Left ventricle myocardium superior (tissue), 1 donor: ENCODE measurements at regions of chr1 and their contacts with region 1.

Region 1: GRCh38 chr1:183471743-183472487 is 384 bp upstream of the SMG7 start:
- DNase-seq: peak; percentile 97
- ATAC-seq: peak; percentile 87

Region 2: DNA sequence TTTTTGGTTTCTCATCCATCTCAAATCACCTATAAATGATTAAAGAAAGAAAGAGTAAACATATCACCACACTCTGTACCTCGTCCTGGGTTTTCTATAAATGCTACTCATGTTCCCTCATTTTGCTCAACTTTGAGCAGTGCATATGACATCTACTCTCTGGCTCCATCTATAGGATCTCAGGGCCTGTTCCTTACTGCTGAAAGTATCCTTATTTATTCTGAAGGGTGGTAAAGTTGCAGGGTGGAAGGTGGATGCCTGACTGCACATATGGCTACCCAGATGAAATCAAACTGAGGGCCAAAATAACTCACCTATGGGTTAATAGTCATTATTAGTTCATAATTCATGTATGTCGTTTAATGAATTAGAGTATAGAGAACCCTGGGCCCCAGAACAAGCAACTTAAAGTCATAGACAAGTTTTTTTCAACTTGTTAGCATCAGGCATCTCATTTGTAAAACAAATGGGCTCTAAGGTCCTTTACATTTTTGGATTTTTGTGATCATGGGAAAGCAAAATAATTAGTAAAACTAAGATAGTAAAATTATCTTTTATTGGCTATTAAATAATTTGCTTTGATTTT is 71.8 kb after region 1 on chr1:
- intact Hi-C with region 1: loop called (anchors 10 kb)
- DNase-seq: no peak
- ATAC-seq: peak; percentile 81